Psoas muscle (tissue), 8 donors: ENCODE measurements at regions of chr6 and their contacts with region 1.

Region 1: GRCh38 chr6:52020945-52021570 is 66.4 kb downstream of the PKHD1 start:
- DNase-seq: no peak
- ATAC-seq: peak in 1 of 4 donors; percentile 54
- H3K4me3 ChIP-seq: no peak overlapping the region
- H3K27ac ChIP-seq: no peak overlapping the region
- H3K4me1 ChIP-seq: no peaks in the 10 kb centered on the region
- H3K27me3 ChIP-seq: no peaks in the 10 kb centered on the region
- CTCF ChIP-seq: peak; percentile 84

Region 2: DNA sequence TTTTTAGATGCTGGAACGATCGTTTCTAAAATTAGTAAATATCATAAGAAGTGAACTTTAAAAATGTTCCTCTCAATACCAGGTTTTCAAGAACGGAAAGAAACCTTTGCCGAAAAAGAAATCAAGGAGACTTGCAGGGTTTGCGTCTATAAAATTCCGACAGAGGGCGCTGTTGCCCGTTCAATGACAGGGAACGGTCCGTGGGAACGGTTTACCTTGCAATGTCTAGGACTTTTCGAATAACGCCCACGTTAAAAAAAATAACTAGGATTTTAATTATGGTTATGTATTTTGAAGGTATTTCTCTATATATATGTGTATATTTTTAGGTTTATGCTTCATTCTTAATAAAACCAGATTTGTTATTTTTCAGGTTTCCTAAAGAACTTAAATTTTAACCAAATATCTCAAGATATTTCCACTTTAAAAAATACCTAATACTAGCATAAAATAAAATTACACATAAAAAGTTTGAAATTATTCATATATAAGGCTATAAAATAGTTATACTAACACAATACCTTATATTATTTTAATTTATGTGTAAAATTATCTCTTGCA is 1204.9 kb before region 1 on chr6:
- intact Hi-C with region 1: loop called (anchors 5 to 10 kb)
- DNase-seq: peak; percentile 56 to 72
- ATAC-seq: peak in 2 of 4 donors; percentile 55 to 81
- H3K4me3 ChIP-seq: peak overlapping the region; percentile 59
- H3K27ac ChIP-seq: no peak overlapping the region
- H3K4me1 ChIP-seq: peaks cover 4% of the 10 kb centered on the region
- H3K27me3 ChIP-seq: peaks cover 10 to 70% (median 14%) of the 10 kb centered on the region in 3 donors
- CTCF ChIP-seq: peak; percentile 81

Region 3: GRCh38 chr6:51531623-51532022 is 489.4 kb before region 1 on chr6:
- intact Hi-C with region 1: loop called in 1 of 2 experiments (anchors 10 kb)
- DNase-seq: no peak
- ATAC-seq: no peak
- H3K4me3 ChIP-seq: no peak overlapping the region
- H3K27ac ChIP-seq: no peak overlapping the region
- H3K4me1 ChIP-seq: no peaks in the 10 kb centered on the region
- H3K27me3 ChIP-seq: no peaks in the 10 kb centered on the region
- CTCF ChIP-seq: no peak

Region 4: DNA sequence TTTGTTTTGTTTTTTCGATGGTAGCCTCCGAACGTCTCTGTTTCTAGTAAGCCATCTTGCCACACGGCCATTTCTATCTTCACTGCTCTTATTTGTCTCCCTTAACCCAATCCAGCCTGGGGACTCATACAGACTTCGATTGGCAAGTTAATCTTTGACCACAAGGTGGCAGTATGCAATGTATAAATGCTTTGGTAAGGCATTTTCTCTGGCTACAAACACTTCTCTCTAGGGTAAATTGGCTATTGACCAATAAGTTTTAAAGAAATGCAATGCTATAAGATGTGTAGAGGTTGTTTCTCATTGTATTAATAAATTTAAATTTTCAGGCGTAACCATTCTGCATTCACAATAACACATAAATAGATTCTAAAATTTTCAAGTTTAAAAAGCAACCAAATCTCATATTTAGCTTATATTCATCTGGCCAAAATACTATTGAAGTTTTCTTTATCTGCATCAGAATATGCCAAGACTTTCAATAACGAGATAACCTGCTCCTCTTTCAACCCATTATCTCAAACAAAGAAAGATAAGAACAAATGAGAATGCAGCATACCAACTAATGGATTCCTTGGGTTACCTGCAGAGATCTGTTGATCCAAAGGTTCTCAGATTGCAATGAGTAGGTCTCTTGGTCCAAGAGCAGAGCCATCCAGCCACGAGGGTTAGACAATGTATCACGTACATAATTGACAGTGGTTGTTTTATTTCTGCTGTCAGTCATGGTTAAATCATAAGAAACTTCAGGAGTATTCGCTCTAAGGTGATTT is 165.6 kb before region 1 on chr6:
- intact Hi-C with region 1: loop called (anchors 2 to 5 kb)
- DNase-seq: no peak
- ATAC-seq: peak in 1 of 4 donors; percentile 67
- H3K4me3 ChIP-seq: no peak overlapping the region
- H3K27ac ChIP-seq: no peak overlapping the region
- H3K4me1 ChIP-seq: no peaks in the 10 kb centered on the region
- H3K27me3 ChIP-seq: no peaks in the 10 kb centered on the region
- CTCF ChIP-seq: peak; percentile 66

Region 5: GRCh38 chr6:52371656-52372191 is 350.7 kb after region 1 on chr6:
- intact Hi-C with region 1: no loop called
- DNase-seq: no peak
- ATAC-seq: no peak
- H3K4me3 ChIP-seq: no peak overlapping the region
- H3K27ac ChIP-seq: no peak overlapping the region
- H3K4me1 ChIP-seq: no peaks in the 10 kb centered on the region
- H3K27me3 ChIP-seq: peaks cover 0 to 5% (median 0%) of the 10 kb centered on the region in 3 donors
- CTCF ChIP-seq: no peak